Endothelial cell of umbilical vein (primary cell): ENCODE measurements at regions of chr20 and their contacts with region 1.

Region 1: DNA sequence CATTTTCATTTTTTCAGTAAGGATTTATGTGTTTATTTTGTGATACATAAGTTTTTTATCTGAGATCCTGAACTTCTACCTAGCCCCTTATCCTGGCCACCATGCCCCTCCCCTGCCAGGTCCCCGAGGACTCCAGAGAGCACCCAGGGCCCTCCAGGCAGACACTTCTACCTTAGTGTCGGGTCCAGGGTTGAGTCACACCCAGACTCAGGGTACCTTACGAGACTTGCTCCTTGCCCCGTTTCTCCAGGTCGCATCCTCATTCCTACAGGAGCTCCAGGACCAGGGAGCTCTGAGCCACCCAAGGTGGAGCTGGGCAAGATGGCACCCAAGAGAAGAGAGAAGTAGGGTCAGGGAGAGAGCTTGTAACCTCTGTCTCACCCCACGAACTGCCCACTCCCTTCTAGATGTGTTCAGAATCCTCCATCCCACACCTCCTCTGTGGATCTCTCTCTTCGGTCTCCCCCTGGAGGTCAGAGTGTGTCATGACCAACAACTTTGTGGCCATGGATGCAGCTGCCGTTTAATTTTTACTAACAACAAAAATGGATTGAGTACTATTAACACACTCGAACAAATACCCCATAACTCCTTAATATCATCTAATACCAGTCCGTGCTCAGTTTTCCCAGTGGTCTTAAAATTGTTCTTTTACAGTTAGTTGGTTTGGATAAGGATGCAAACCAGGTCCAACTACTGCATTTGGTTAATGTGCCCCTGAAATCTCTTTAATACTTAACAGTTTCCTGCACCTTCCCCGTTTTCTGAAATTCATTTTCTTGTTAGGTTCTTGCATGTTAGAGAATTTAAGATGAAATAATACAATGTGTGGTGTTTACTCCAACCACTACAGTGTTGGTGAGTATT is 130.6 kb upstream of the INSM1 start:
- DNase-seq: peak; percentile 37
- H3K4me3 ChIP-seq: no peak overlapping the region
- H3K27ac ChIP-seq: no peak overlapping the region
- H3K4me1 ChIP-seq: no peaks in the 10 kb centered on the region
- H3K27me3 ChIP-seq: peaks cover 0 to 1% of the 10 kb centered on the region in 2 experiments
- CTCF ChIP-seq: peak; percentile 62 to 71
- POLR2A ChIP-seq: no peak

Region 2: DNA sequence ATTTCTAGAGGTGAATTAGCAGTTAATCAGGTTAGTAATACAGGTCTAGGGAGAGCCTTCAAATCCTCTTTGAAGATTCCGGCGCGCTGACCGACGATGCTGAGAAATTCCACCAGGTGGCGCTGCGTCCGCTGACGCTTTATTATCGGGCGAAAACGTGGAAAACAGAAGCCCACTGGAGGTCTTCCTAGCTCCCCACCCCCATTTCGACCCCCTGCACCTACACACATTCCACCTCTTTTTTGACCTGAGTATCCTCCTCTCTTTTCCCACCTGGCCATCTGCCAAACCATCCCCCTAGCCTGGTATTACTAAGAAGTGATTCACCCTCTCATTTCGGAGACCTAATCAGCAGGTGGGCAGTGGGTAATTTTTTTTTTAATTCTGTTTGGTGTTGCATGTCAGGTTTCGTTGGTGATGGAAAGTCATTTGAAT is 544.6 kb before region 1 on chr20:
- CTCF ChIA-PET with region 1: interaction called, 7 read pairs
- POLR2A ChIA-PET with region 1: no interaction called
- dilution Hi-C with region 1: no loop called
- intact Hi-C with region 1: loop called (anchors 1 kb)
- DNase-seq: peak; percentile 68
- H3K4me3 ChIP-seq: no peak overlapping the region
- H3K27ac ChIP-seq: no peak overlapping the region
- H3K4me1 ChIP-seq: peaks cover 5% of the 10 kb centered on the region
- H3K27me3 ChIP-seq: no peaks in the 10 kb centered on the region
- CTCF ChIP-seq: peak; percentile 84 to 87
- POLR2A ChIP-seq: no peak

Region 3: GRCh38 chr20:20130399-20130798 is 106.9 kb before region 1 on chr20:
- CTCF ChIA-PET with region 1: interaction called, 28 read pairs
- POLR2A ChIA-PET with region 1: no interaction called
- dilution Hi-C with region 1: no loop called
- intact Hi-C with region 1: loop called (anchors 1 kb)
- DNase-seq: peak; percentile 12
- H3K4me3 ChIP-seq: no peak overlapping the region
- H3K27ac ChIP-seq: no peak overlapping the region
- H3K4me1 ChIP-seq: peaks cover 6% of the 10 kb centered on the region
- H3K27me3 ChIP-seq: peaks cover 1 to 4% of the 10 kb centered on the region in 2 experiments
- CTCF ChIP-seq: peak in 1 of 2 donors; percentile 1
- POLR2A ChIP-seq: no peak

Region 4: DNA sequence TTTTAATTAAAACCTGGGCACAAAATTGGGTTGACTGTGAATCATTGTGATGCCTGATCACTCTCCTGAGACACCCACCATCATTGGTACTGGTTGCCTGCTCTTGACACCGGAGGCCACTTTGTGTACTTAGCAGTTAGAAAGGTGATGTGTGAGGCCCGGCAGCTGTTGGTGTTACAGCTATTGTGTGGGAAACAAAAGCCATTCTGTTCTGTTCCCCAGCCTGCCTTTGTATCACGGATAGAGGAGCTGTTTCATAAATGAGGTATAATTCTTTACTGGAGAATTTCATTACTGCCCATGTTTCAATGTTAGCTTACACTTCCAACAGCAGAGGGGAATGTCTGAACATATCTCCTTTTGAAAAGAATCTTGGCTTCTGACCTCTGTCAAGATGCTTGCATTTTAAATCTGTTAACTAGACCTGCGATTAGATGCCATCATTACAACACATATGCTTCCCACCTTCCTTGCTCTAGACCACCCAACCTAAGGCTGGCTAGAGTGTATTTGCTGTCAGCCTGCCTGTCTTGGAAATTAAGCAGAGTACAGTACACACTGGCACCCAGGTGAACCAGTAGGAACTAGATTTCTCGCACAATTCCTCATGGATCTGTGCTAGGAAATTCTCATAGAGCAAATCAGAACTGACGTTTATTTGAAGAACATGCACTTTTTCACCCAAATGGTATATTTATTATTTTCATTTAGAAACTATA is 11.8 kb before region 1 on chr20:
- CTCF ChIA-PET with region 1: interaction called, 18 read pairs
- POLR2A ChIA-PET with region 1: no interaction called
- dilution Hi-C with region 1: no loop called
- intact Hi-C with region 1: no loop called
- DNase-seq: no peak
- H3K4me3 ChIP-seq: no peak overlapping the region
- H3K27ac ChIP-seq: no peak overlapping the region
- H3K4me1 ChIP-seq: no peaks in the 10 kb centered on the region
- H3K27me3 ChIP-seq: no peaks in the 10 kb centered on the region
- CTCF ChIP-seq: no peak
- POLR2A ChIP-seq: no peak

Region 5: DNA sequence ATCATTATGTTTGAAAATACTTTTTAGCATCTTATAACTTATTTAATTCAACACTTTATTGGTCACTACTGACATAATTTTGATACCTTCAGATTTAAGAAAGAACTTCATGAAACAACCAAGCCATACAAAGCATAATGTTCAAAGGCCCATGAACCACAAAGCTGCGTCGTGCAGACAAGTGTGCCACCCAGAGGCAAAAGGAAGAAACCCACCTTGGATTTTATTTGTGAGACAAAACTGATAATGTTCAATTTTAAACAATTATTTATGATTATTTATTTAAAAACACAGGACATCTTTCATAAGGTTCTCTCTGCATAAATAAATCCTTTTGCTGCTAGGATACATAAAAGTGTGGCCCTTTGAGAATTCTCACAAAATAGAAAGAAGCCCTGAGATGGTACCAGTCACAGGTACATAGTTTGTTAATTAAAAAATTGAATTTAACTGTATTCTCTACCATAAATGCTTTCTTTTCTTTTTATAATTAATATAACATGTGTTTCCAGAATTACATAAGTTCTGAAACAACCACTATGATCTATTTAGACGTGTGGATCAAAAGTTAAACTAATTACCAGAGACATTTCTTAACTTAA is 331.4 kb after region 1 on chr20:
- CTCF ChIA-PET with region 1: interaction called, 3 read pairs
- POLR2A ChIA-PET with region 1: no interaction called
- dilution Hi-C with region 1: no loop called
- intact Hi-C with region 1: loop called (anchors 10 kb)
- DNase-seq: peak; percentile 42
- H3K4me3 ChIP-seq: no peak overlapping the region
- H3K27ac ChIP-seq: no peak overlapping the region
- H3K4me1 ChIP-seq: no peaks in the 10 kb centered on the region
- H3K27me3 ChIP-seq: no peaks in the 10 kb centered on the region
- CTCF ChIP-seq: peak; percentile 56 to 60
- POLR2A ChIP-seq: no peak

Region 6: DNA sequence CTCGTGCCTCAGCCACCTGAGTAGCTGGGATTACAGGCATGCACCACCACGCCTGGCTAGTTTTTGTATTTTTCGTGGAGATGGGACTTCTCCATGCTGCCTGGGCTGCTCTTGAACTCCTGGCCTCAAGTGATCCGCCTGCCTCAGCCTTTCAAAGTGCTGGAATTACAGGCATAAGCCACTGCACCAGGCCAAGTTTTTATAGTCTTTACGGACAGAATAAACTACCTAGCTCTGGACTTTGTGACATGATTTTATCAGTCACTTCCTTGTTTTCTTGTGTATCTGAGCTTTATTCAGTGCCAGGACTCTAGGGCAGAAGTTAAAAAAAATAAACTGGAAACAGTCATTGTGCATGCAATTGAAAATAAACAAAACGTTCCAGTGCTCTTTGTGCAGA is 521.8 kb after region 1 on chr20:
- CTCF ChIA-PET with region 1: no interaction called
- POLR2A ChIA-PET with region 1: no interaction called
- dilution Hi-C with region 1: no loop called
- intact Hi-C with region 1: no loop called
- DNase-seq: peak; percentile 81
- H3K4me3 ChIP-seq: no peak overlapping the region
- H3K27ac ChIP-seq: peak overlapping the region; percentile 46
- H3K4me1 ChIP-seq: peaks cover 38% of the 10 kb centered on the region
- H3K27me3 ChIP-seq: no peaks in the 10 kb centered on the region
- CTCF ChIP-seq: no peak
- POLR2A ChIP-seq: no peak